Activated CD4-positive, alpha-beta T cell treated with anti-CD3 and anti-CD28 coated beads, Interleukin-2, amount 10 ng/mL, durations not matched to agents 24 days and 14 days (primary cell): ENCODE measurements at regions of chr4 and their contacts with region 1.

Region 1: GRCh38 chr4:145936142-145936996 is 2.3 kb downstream of the ZNF827 start:
- DNase-seq: peak; percentile 89
- H3K4me3 Mint-ChIP-seq: peak overlapping the region; percentile 94
- H3K27ac Mint-ChIP-seq: peak overlapping the region; percentile 97
- H3K4me1 Mint-ChIP-seq: peaks cover 40% of the 10 kb centered on the region
- H3K27me3 Mint-ChIP-seq: no peaks in the 10 kb centered on the region

Region 2: GRCh38 chr4:145481164-145481941 is 455.0 kb before region 1 on chr4 and contains the start of gene SMAD1:
- intact Hi-C with region 1: loop called (anchors 5 kb)
- DNase-seq: peak; percentile 75
- H3K4me3 Mint-ChIP-seq: no peak within 1 kb of the TSS
- H3K27ac Mint-ChIP-seq: peak within 1 kb of the TSS; percentile 79
- H3K4me1 Mint-ChIP-seq: peaks cover 10% of the 10 kb centered on the region
- H3K27me3 Mint-ChIP-seq: peaks cover 38% of the 10 kb centered on the region
- total RNA-seq, gene SMAD1: 3.9 and 4.3 TPM in 2 replicates

Region 3: DNA sequence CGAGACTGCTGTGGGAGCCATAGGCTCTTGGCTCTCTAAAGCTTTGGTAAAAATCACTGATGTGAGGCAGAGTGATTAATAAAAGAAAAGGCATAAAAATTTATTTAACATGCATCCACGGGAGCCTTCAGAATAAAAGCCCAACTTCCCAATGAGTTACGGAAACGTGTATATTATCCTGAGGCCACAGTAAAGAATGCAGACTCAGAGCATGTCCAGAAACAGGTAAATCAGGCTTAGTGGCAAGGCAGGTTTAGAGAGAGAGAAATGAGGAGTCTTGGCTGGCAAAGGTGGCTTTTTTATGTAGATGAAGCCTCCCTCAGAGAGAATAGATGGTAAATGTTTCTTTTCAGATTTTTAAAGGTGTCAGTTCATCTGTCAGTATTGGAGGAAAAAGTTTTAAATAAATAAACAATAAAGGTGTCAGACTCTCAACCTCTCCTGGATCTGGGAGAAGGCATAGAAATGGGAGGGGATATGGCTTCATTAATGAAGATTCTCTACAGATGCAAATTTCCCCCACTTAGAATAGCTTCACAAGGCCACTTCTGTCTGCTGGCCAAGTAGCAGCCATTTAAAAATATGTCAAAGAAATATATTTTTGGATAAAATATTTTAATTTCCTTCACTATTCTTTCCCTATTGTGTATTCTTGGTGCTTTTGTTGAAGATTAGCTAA is 232.4 kb before region 1 on chr4:
- intact Hi-C with region 1: no loop called
- DNase-seq: no peak
- H3K4me3 Mint-ChIP-seq: no peak overlapping the region
- H3K27ac Mint-ChIP-seq: no peak overlapping the region
- H3K4me1 Mint-ChIP-seq: peaks cover 6% of the 10 kb centered on the region
- H3K27me3 Mint-ChIP-seq: peaks cover 7% of the 10 kb centered on the region

Region 4: DNA sequence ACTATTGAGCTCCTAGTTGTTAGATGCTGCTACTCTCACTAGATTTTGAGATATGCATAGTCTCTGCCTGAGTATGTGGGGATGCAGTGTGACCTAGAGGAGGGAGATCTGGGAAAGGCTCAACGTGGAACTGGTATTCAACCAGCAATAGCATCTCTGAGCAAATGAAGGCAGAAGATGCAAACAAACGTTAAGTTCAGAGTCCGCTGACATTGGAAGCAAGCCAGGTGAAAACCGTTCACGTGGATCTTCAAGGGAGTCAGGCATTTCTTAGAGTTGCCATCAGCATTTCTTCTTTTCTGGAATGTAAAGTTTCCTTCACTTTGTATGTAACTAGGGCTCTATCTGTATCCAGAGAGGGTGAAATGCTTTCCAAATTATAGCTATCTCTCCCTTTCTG is 196.5 kb before region 1 on chr4:
- intact Hi-C with region 1: no loop called
- DNase-seq: no peak
- H3K4me3 Mint-ChIP-seq: no peak overlapping the region
- H3K27ac Mint-ChIP-seq: no peak overlapping the region
- H3K4me1 Mint-ChIP-seq: peaks cover 2% of the 10 kb centered on the region
- H3K27me3 Mint-ChIP-seq: peaks cover 17% of the 10 kb centered on the region

Region 5: DNA sequence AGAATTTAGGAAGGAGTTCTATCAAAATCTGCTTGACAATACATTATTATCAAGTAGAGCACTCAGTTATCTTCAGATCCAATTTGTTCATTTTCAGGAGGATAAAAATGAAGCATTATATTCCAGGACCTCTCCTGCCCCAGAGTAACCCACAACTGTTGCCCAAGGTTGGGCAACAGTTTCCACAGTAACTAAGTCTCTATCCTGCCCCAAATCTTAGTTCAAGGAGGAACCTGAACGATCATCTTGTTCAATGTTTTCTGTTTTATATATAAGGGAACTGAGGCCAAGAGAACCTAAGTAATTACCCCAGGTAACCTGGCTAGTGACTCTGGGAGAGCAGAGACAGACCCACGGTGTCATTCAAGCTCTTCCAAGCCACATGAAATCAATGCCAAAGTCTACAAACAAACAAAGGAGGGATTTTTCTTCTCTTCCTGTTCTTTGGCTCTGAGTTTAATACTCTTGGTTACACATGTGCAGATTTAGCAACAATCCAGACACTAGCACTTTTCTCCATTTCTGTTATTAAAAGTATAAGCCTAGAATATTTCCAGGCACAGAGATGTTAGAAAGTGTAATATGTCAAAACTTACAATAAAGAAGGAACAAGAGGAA is 150.9 kb before region 1 on chr4:
- intact Hi-C with region 1: loop called (anchors 2 kb)
- DNase-seq: no peak
- H3K4me3 Mint-ChIP-seq: no peak overlapping the region
- H3K27ac Mint-ChIP-seq: peak overlapping the region; percentile 98
- H3K4me1 Mint-ChIP-seq: peaks cover 39% of the 10 kb centered on the region
- H3K27me3 Mint-ChIP-seq: no peaks in the 10 kb centered on the region

Region 6: GRCh38 chr4:145868637-145869409 is 67.5 kb before region 1 on chr4:
- intact Hi-C with region 1: loop called (anchors 10 kb)
- DNase-seq: no peak
- H3K4me3 Mint-ChIP-seq: no peak overlapping the region
- H3K27ac Mint-ChIP-seq: no peak overlapping the region
- H3K4me1 Mint-ChIP-seq: peaks cover 23% of the 10 kb centered on the region
- H3K27me3 Mint-ChIP-seq: no peaks in the 10 kb centered on the region

Region 7: GRCh38 chr4:146175541-146176453 is 239.4 kb after region 1 on chr4 and contains the start of gene LSM6:
- intact Hi-C with region 1: loop called (anchors 1 kb)
- DNase-seq: peak; percentile 95
- H3K4me3 Mint-ChIP-seq: peak within 1 kb of the TSS; percentile 84
- H3K27ac Mint-ChIP-seq: peak within 1 kb of the TSS; percentile 89
- H3K4me1 Mint-ChIP-seq: peaks cover 27% of the 10 kb centered on the region
- H3K27me3 Mint-ChIP-seq: no peaks in the 10 kb centered on the region
- total RNA-seq, gene LSM6: 60.4 and 60.7 TPM in 2 replicates

Region 8: DNA sequence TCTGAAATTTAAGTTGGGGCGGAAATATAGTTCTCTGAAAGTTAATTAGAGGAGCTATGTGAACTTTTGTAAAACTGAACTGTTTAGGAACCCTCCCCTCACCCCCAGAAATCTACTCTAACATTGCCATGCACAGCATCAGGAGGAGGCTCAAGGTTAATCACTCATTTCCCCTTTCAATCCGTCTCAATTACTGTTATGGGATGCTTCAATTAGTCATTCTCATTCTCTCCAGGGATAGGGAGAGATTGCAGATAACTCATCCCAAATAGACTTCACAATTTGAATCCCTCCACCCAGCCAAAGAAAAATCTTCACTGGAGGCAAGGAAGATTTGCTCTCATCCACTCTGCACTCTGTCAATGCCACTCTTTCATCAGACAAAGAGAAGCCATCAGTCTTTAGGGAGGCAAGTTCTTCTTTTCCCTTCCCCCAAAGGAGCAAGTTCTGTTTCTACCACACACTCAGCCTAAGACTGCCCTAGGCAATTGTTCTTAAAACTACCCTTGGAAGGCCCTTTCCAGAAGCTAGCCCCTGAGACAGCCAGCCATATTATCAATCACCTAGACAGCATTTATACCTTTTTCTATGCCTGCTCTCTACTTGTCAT is 445.0 kb after region 1 on chr4:
- intact Hi-C with region 1: no loop called
- DNase-seq: no peak
- H3K4me3 Mint-ChIP-seq: no peak overlapping the region
- H3K27ac Mint-ChIP-seq: no peak overlapping the region
- H3K4me1 Mint-ChIP-seq: no peaks in the 10 kb centered on the region
- H3K27me3 Mint-ChIP-seq: no peaks in the 10 kb centered on the region

Region 9: GRCh38 chr4:146522098-146522868 is 585.9 kb after region 1 on chr4:
- intact Hi-C with region 1: loop called (anchors 5 kb)
- DNase-seq: peak; percentile 96
- H3K4me3 Mint-ChIP-seq: no peak overlapping the region
- H3K27ac Mint-ChIP-seq: no peak overlapping the region
- H3K4me1 Mint-ChIP-seq: peaks cover 18% of the 10 kb centered on the region
- H3K27me3 Mint-ChIP-seq: no peaks in the 10 kb centered on the region

Region 10: DNA sequence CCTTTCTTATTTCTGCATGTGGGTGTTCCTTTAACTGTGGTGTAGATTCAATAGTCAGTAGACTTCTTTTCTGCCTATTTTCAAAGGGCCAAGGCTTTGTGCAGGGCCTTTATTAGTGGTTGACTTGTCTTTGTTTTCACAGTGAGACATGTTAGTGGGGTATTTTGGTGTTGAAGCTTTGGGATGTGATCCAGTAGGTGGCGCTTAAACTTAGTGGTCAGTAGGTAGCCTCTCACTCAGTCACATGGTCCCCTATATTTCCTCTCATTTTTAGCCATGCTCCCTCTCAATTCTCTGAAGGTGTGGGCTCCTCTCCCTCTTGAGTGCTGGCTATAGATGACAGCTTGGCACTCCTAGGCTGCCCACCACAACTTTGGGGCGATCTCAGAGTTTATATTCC is 608.7 kb after region 1 on chr4:
- intact Hi-C with region 1: no loop called
- DNase-seq: no peak
- H3K4me3 Mint-ChIP-seq: no peak overlapping the region
- H3K27ac Mint-ChIP-seq: no peak overlapping the region
- H3K4me1 Mint-ChIP-seq: no peaks in the 10 kb centered on the region
- H3K27me3 Mint-ChIP-seq: peaks cover 27% of the 10 kb centered on the region